ENCODE measurements at regions of chr19 and their contacts with region 1.

Region 1: DNA sequence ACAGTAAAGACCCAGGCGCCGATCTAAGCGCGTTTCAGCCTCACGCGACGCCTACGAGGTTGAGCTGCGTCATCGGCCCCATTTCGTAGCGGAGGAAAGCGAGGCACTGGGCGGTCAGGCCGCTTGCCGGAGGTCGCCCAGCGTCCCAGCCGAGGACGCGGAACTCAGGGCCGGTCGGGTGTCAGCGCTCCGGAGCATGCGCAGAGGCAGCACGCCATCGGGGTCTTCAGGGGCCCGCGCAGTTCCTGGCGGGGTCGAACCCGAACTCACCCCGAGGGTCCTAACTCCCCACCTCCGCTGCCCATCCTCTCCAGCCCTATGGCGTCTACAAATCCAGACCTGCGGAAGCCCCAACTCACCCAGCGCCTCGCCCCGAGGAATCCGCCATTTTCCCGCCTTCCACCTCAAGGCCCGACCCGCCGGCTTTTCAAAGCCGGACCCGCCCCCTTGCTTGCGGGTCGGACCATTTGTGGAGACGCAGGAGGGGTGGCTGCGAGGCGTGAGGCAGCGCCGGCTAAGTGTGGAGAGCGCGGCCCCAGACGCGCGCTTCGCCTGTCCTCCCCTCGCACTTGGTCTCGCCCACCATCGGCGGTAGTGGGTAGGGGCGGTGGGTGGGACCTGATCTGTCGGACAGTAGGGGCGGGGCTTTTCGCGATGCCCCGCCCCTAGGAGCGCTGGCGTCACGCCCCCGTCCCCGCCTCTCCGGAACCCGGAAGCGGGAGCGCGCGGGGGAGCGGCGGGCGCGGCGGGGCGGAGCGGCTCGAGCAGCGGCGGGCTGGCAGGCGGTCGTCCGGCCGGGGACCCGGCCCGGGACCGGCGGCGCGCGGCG is at the starts of genes HAUS8 and MYO9B:
- DNase-seq: peak; percentile 98
- ATAC-seq: peak; percentile 87
- H3K4me3 Mint-ChIP-seq: peak within 1 kb of the TSS; percentile 99
- H3K27ac Mint-ChIP-seq: peak within 1 kb of the TSS; percentile 97
- H3K4me1 Mint-ChIP-seq: peaks cover 75% of the 10 kb centered on the region
- H3K27me3 Mint-ChIP-seq: no peaks in the 10 kb centered on the region
- CTCF ChIP-seq: no peak
- total RNA-seq, gene HAUS8: 15.8 and 17.8 TPM in 2 replicates
- total RNA-seq, gene MYO9B: 217 and 239 TPM in 2 replicates

Region 2: DNA sequence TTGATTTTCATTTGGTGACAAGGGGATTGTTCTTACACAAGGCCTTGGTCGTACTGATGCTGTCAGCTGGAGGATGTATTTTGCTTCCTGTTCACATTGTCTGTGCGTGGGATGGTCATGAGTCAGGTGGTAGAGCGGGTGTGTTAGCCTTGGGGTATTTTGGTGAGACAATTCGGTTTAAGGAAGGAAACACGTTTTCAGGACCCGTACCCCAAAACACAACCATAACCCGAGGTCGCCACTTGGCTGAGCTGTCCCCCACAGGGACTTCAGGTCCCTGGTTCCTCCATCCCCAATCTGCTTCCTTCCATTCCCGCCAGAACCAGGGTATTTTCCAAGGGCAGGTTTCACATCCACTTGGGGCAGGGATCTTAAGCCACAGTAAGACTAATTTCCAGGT is 15.3 kb after region 1 on chr19:
- CTCF ChIA-PET with region 1: no interaction called
- POLR2A ChIA-PET with region 1: interaction called, 13 read pairs
- intact Hi-C with region 1: loop called (anchors 1 kb)
- DNase-seq: no peak
- ATAC-seq: peak; percentile 70
- H3K4me3 Mint-ChIP-seq: peak overlapping the region; percentile 29
- H3K27ac Mint-ChIP-seq: peak overlapping the region; percentile 85
- H3K4me1 Mint-ChIP-seq: peaks cover 59% of the 10 kb centered on the region
- H3K27me3 Mint-ChIP-seq: no peaks in the 10 kb centered on the region
- CTCF ChIP-seq: no peak

Region 3: DNA sequence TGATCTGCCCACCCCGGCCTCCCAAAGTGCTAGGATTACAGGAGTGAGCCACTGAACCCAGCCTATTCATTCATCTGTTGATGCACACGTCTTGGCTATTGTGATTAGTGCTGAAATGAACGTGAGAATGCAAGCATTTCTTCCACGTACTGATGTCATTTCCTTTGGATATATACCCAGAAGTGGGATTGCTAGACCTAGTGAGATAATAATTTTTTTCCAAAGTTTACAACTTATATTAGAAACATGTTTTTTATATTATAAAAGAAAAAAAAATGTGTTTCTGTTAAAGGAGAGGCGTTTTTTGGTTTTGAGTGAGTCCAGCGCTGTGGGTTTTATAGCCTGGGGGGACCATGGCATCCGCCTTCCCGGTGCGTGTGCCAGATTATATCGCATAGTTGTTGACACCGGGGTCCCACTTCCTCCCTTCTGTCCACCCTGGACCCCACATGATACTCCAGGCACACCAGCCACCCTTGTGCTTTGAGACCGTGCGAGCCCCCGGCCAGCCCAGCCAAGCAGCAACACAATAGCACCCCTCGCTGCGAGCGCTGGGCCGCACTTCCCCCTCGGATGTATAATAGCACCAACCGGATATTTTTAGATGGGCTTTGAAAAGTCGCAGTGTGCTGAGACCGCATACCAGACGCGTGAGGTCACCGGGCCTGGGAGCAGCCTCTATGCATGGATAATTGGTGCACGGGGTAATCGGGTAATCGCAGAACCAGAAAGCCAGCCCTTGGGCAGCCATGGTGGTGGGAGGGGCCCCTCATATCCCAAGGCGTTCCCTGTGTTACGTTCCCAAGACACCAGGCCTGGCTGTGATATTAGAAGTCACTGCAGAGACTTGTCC is 60.0 kb after region 1 on chr19:
- CTCF ChIA-PET with region 1: no interaction called
- POLR2A ChIA-PET with region 1: interaction called, 9 read pairs
- intact Hi-C with region 1: loop called (anchors 1 kb)
- DNase-seq: peak; percentile 58
- ATAC-seq: peak; percentile 86
- H3K4me3 Mint-ChIP-seq: peak overlapping the region; percentile 77
- H3K27ac Mint-ChIP-seq: peak overlapping the region; percentile 86
- H3K4me1 Mint-ChIP-seq: peaks cover 67% of the 10 kb centered on the region
- H3K27me3 Mint-ChIP-seq: no peaks in the 10 kb centered on the region
- CTCF ChIP-seq: no peak

Region 4: DNA sequence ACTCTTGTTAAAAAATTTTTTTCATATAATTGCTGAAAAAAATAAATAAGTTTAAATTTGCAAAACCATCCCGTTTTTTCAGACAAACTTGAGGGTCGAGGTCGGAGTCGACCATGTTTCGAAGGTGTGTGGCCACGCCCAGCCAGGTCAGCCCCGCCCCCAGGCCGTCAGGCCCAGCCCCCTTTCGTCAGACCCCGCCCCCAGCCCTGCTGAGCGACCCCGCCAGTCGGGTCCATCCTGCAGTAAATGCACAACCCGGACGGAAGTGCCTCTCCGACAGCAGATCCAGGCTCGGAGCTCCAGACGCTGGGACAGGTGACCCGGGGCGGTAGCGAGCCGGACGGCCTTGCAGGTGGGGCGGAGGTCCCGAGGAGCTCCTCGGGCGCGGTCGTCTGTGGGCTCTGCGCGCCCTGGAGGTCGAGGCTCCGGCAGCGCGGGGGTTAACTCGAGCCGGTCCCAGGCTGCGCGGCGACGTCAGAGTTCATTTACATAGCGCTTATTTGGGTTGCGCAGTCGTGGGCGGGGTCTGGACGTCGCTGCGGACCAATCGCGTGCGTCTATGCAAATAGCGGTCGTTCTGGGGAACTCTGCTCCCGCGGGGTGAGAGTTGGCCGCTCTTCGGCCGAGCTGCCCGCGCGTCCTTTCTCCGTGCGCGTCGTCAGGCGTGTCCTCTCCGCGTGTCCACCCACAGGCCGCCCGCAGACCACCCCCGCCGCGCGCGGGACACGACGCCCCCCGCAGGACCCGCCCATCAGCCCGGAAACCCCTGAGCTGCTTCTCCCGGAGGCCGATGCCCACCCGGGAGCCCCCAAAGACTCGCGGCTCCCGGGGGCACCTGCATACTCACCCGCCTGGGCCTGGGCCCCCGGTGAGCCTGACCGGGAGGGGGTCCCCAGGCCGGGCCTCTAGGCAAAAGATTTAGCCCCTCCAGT is 151.0 kb after region 1 on chr19 and contains the start of gene OCEL1:
- CTCF ChIA-PET with region 1: no interaction called
- POLR2A ChIA-PET with region 1: interaction called, 7 read pairs
- intact Hi-C with region 1: loop called (anchors 1 kb)
- DNase-seq: peak; percentile 95
- ATAC-seq: peak; percentile 90
- H3K4me3 Mint-ChIP-seq: peak within 1 kb of the TSS; percentile 95
- H3K27ac Mint-ChIP-seq: peak within 1 kb of the TSS; percentile 97
- H3K4me1 Mint-ChIP-seq: peaks cover 6% of the 10 kb centered on the region
- H3K27me3 Mint-ChIP-seq: no peaks in the 10 kb centered on the region
- CTCF ChIP-seq: no peak
- total RNA-seq, gene OCEL1: 22.4 and 25.8 TPM in 2 replicates

Region 5: DNA sequence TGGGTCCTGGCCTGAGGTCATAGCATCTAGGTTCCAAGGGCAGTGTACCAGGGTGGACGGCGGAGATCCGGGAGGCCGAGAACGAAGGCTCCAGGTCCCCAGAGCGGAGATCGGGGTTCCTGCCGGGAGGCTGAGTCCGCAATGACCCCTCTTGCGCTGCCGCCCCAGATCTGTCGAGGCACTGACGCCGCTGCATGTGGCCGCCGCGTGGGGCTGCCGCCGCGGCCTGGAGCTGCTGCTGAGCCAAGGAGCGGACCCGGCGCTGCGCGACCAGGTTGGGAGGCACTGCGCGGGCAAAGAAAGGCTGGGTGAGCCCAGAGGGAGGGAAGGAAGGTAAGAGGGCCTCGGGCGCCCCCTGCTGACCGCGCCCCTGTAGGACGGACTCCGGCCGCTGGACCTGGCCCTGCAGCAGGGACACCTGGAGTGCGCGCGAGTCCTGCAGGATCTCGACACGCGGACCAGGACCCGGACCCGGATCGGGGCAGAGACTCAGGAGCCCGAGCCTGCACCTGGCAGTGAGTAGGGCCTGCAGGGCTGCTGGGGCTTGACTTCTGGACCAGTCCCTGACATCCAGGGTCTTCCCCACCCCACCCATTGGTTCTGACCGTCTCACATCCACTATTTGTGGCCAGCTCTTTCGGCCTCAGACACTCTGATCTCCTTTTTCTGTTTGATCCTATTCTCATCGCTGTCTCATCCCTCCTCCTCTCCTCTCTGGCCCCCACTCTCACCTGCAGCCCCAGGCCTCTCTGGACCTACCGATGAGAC is 207.4 kb after region 1 on chr19:
- CTCF ChIA-PET with region 1: interaction called, 10 read pairs
- POLR2A ChIA-PET with region 1: interaction called, 13 read pairs
- intact Hi-C with region 1: loop called (anchors 2 kb)
- DNase-seq: peak; percentile 79
- ATAC-seq: peak; percentile 84
- H3K4me3 Mint-ChIP-seq: peak overlapping the region; percentile 85
- H3K27ac Mint-ChIP-seq: no peak overlapping the region
- H3K4me1 Mint-ChIP-seq: peaks cover 12% of the 10 kb centered on the region
- H3K27me3 Mint-ChIP-seq: no peaks in the 10 kb centered on the region
- CTCF ChIP-seq: peak; percentile 52

Measured in activated B cell treated with CpG ODN at 0.5 μM for 24 hours (primary cell).